Right ventricle myocardium superior (tissue), 1 donor: ENCODE measurements at regions of chr5 and their contacts with region 1.

Region 1: GRCh38 chr5:131589510-131590348 is 45.3 kb downstream of the RAPGEF6 start:
- DNase-seq: no peak
- ATAC-seq: peak; percentile 78

Region 2: GRCh38 chr5:131720714-131721113 is 131.0 kb after region 1 on chr5:
- intact Hi-C with region 1: no loop called
- DNase-seq: no peak
- ATAC-seq: peak; percentile 69

Region 3: GRCh38 chr5:131810510-131811249 is 221.0 kb after region 1 on chr5:
- intact Hi-C with region 1: loop called (anchors 10 kb)
- DNase-seq: no peak
- ATAC-seq: peak; percentile 94

Region 4: DNA sequence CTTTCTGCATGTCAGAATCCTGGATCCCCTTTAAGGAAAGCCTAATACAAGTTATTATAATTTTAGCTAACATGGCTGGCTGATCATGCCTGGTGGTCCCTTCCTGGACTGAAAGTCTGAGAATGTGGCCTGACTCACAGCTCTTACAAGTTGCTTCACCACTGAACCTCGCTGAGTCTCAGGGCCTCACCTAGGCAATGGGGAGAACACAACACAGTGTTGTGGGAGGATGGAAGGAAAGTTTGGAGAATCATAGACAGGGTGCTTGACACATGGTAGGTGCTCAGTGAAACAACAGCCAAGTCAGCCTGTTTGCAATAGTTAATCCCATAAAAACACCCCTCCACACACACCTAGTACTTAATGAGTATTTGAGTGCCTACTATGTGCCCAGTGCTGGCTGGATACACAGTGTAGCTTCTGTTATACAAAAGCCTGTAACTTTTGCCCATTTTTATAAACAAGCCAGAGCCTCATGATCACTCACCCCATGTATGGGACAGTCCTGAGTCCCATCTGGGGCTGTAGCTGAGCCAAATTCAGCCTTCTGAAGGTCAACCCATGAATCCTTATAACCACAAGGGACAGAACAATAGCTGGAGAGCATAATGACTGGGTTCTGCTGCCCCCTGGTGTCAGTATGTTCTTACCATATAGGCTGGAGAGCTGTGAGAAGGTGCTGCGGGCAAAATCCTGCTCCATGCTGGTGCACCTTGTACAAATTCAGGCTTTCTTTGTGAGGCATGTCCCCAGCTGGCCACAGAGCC is 417.9 kb after region 1 on chr5:
- intact Hi-C with region 1: loop called (anchors 2 kb)
- DNase-seq: peak; percentile 68
- ATAC-seq: peak; percentile 81

Region 5: DNA sequence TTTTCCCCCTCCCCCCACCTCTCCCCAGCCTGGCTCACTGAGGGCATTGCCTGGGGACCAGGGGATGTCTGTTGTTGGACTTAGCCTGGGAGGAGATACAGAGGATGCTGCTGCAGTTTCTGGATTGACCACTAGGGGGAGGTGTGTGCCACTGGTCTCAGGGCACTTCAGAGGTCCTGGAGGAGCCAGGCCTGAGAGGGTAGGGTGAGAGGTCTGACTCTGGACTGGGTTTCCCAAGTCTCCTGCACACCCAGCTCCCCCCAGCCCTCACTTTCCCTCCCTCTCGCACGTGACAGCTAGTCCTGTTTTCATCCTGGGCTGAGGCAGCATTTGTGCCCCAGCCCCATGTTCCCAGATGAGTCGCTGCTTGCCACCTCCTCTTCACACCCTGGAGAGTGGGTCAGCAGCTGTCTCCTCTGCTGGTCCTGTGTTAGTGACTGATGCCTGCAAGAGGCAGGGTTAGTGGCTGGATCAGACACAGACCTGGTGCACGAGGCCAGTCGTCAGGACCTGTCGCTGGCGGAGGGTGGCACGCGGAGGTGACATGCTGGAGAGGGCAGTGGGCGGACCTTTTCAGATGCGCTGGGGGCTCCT is 475.1 kb after region 1 on chr5:
- intact Hi-C with region 1: loop called (anchors 5 kb)
- DNase-seq: peak; percentile 72
- ATAC-seq: peak; percentile 84